B cell (primary cell): ENCODE measurements at regions of chr6 and their contacts with region 1.

Region 1: DNA sequence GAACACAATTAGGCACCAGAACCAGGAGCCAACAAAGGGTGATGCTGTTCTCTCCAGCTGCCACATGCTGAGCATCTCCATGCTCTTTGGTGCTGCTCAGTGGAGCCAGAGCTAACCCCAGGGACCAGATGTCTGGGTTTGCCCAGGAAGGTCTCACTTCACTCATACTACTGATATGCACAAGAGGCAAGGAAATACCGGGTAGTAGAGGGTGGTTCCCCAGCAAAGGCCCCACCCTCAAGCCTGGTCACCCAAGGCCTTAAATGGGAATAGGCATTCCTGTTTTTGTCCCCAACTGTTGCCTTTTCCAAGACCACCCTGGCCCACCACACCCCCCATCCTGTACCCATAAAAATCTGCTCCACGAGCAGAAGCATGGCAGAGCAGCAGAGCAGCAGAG is 204.5 kb upstream of the TAB2 start:
- DNase-seq: peak; percentile 25
- ATAC-seq: no peak
- H3K4me3 ChIP-seq: no peak overlapping the region
- H3K4me3 Mint-ChIP-seq: peak overlapping the region; percentile 44
- H3K27ac ChIP-seq: peak overlapping the region in 1 of 2 donors; percentile 29
- H3K27ac Mint-ChIP-seq: peak overlapping the region; percentile 83
- H3K4me1 ChIP-seq: peaks cover 31 to 37% of the 10 kb centered on the region in 2 donors
- H3K4me1 Mint-ChIP-seq: peaks cover 47% of the 10 kb centered on the region
- H3K27me3 ChIP-seq: no peaks in the 10 kb centered on the region
- H3K27me3 Mint-ChIP-seq: no peaks in the 10 kb centered on the region
- CTCF ChIP-seq: no peak

Region 2: DNA sequence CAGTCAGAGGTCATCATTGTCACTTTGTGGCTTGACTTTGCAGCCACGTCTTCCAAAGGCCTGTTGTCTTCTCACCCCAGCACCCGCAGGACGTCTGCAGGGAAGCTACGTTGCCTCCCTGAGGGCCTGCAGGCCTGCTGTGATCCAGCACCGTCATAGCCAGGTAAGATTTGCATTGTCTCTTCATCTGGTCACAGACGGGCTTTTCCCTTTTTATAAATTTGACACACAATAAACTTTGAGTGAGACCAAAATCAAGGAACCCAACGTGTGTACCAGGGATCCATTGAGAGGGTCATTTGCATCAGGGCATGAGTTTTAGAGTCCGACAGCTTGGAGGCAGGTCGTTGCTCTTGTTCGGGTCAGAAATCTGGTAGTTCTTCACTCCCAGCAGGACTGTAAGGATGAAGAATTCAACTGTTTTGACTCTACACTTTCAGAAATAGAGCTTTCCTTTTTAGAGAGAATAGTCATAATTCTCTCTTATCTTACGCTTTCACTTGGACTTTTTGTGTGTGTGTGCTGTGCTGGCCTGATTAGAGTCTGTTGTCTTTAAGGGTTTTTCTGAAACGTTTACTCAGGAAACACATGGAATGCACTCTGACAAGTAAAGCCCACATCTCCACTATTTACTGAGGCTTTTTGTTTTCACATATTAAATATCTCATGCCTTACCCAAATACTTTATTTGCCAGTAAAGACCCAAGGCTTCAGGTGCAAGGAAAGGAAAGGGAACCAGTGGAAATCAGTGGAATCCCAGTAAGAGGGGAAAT is 27.3 kb after region 1 on chr6:
- CTCF ChIA-PET with region 1: no interaction called
- POLR2A ChIA-PET with region 1: no interaction called
- intact Hi-C with region 1: loop called (anchors 1 kb)
- DNase-seq: peak; percentile 52
- ATAC-seq: peak; percentile 85
- H3K4me3 ChIP-seq: peak overlapping the region in 1 of 5 experiments; percentile 1
- H3K4me3 Mint-ChIP-seq: peak overlapping the region; percentile 60
- H3K27ac ChIP-seq: peak overlapping the region in 1 of 2 donors; percentile 29
- H3K27ac Mint-ChIP-seq: peak overlapping the region; percentile 34
- H3K4me1 ChIP-seq: peaks cover 9 to 15% of the 10 kb centered on the region in 2 donors
- H3K4me1 Mint-ChIP-seq: peaks cover 17% of the 10 kb centered on the region
- H3K27me3 ChIP-seq: no peaks in the 10 kb centered on the region
- H3K27me3 Mint-ChIP-seq: peaks cover 3% of the 10 kb centered on the region
- CTCF ChIP-seq: no peak